Ascending aorta (tissue), 2 donors: ENCODE measurements at regions of chr11 and their contacts with region 1.

Region 1: DNA sequence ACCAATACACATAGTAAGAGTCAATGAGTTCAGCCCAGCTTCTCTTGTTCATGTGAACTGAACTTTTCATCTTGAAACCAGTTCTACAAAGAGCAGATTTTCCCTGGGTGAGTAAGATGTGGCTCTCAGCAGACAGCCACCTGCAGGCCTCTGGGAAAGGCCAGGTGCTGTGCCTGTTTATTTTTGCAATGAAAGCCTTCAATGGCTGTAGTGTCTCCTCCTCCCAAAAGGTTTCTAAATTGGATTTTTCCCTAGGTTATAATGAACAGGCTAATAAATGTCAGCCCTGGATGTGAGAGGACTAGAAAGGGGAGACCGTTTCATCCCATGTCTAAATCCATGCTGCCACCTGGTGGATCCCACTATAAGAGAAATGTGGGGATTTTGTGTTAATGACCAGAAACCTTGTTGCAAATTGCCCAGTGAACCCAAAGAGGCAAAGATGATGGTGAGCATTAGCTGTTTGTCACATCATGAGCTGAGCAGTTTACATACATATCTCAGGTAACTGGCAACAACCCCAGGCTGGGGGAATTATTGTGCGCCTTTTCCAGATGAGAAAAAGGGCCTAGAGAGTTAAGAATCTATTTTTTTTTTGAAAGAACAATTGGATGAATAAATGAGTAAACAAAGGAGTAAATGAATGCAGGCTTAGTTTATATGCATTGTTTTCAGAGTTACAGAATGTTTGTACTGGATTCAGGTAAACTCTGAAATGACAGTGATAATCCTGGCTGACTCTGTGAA is 12.7 kb downstream of the C11orf91 start:
- DNase-seq: no peak
- H3K4me3 ChIP-seq: no peak overlapping the region
- H3K27ac ChIP-seq: no peak overlapping the region
- H3K4me1 ChIP-seq: peaks cover 6 to 17% of the 10 kb centered on the region in 2 donors
- H3K27me3 ChIP-seq: no peaks in the 10 kb centered on the region
- CTCF ChIP-seq: peak; percentile 36 to 62 (median 50)

Region 2: GRCh38 chr11:33362051-33362910 is 325.6 kb before region 1 on chr11:
- intact Hi-C with region 1: loop called (anchors 2 kb)
- DNase-seq: no peak
- H3K4me3 ChIP-seq: no peak overlapping the region
- H3K27ac ChIP-seq: no peak overlapping the region
- H3K4me1 ChIP-seq: no peaks in the 10 kb centered on the region
- H3K27me3 ChIP-seq: no peaks in the 10 kb centered on the region
- CTCF ChIP-seq: peak; percentile 46 to 67 (median 62)

Region 3: GRCh38 chr11:33700425-33701271 is 12.7 kb after region 1 on chr11 and contains the start of gene C11orf91:
- intact Hi-C with region 1: loop called (anchors 1 kb)
- DNase-seq: peak; percentile 72 to 96
- H3K4me3 ChIP-seq: peak within 1 kb of the TSS; percentile 67 to 72
- H3K27ac ChIP-seq: peak within 1 kb of the TSS; percentile 58 to 67
- H3K4me1 ChIP-seq: peaks cover 0 to 10% of the 10 kb centered on the region in 2 donors
- H3K27me3 ChIP-seq: no peaks in the 10 kb centered on the region
- CTCF ChIP-seq: no peak
- total RNA-seq, gene C11orf91: not detected

Region 4: GRCh38 chr11:33736148-33736809 is 48.4 kb after region 1 on chr11 and contains the start of gene CD59:
- intact Hi-C with region 1: loop called (anchors 1 kb)
- DNase-seq: peak; percentile 84 to 97
- H3K4me3 ChIP-seq: peak within 1 kb of the TSS; percentile 89 to 95
- H3K27ac ChIP-seq: peak within 1 kb of the TSS; percentile 92 to 93
- H3K4me1 ChIP-seq: no peaks in the 10 kb centered on the region
- H3K27me3 ChIP-seq: no peaks in the 10 kb centered on the region
- CTCF ChIP-seq: no peak
- total RNA-seq, gene CD59: 637 TPM

Region 5: GRCh38 chr11:33773987-33774735 is 86.3 kb after region 1 on chr11 and contains the start of gene FBXO3:
- intact Hi-C with region 1: loop called (anchors 2 kb)
- DNase-seq: peak; percentile 61 to 93
- H3K4me3 ChIP-seq: peak within 1 kb of the TSS; percentile 85 to 90
- H3K27ac ChIP-seq: peak within 1 kb of the TSS; percentile 87 to 89
- H3K4me1 ChIP-seq: peaks cover 7 to 26% of the 10 kb centered on the region in 2 donors
- H3K27me3 ChIP-seq: no peaks in the 10 kb centered on the region
- CTCF ChIP-seq: no peak
- total RNA-seq, gene FBXO3: 11.8 TPM

Region 6: DNA sequence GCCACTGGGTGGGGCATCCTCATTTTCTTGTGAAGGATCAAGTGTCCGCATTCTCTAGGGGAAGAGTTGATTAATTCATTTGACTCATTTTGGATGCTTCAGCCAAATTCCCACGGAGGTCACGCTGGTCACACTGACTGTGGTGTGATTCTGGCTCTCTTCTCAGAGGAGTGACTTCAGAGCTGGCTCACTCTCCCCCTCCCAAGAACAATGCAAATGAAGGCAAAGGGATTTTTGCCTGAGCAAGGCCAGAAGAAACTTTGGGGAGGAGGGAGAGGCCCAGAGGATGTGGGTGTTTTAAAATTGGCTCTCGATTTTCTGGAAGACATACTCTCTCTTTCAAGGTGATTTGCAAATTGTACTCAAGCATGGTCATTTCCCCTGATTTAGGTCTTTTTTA is 255.0 kb after region 1 on chr11:
- intact Hi-C with region 1: loop called (anchors 10 kb)
- DNase-seq: peak in 1 of 2 donors; percentile 84
- H3K4me3 ChIP-seq: no peak overlapping the region
- H3K27ac ChIP-seq: peak overlapping the region; percentile 51 to 74
- H3K4me1 ChIP-seq: peaks cover 0 to 28% of the 10 kb centered on the region in 2 donors
- H3K27me3 ChIP-seq: no peaks in the 10 kb centered on the region
- CTCF ChIP-seq: no peak

Region 7: GRCh38 chr11:33987975-33988580 is 300.2 kb after region 1 on chr11:
- intact Hi-C with region 1: no loop called
- DNase-seq: peak; percentile 27 to 74
- H3K4me3 ChIP-seq: no peak overlapping the region
- H3K27ac ChIP-seq: no peak overlapping the region
- H3K4me1 ChIP-seq: no peaks in the 10 kb centered on the region
- H3K27me3 ChIP-seq: no peaks in the 10 kb centered on the region
- CTCF ChIP-seq: peak; percentile 56 to 74 (median 59)

Region 8: DNA sequence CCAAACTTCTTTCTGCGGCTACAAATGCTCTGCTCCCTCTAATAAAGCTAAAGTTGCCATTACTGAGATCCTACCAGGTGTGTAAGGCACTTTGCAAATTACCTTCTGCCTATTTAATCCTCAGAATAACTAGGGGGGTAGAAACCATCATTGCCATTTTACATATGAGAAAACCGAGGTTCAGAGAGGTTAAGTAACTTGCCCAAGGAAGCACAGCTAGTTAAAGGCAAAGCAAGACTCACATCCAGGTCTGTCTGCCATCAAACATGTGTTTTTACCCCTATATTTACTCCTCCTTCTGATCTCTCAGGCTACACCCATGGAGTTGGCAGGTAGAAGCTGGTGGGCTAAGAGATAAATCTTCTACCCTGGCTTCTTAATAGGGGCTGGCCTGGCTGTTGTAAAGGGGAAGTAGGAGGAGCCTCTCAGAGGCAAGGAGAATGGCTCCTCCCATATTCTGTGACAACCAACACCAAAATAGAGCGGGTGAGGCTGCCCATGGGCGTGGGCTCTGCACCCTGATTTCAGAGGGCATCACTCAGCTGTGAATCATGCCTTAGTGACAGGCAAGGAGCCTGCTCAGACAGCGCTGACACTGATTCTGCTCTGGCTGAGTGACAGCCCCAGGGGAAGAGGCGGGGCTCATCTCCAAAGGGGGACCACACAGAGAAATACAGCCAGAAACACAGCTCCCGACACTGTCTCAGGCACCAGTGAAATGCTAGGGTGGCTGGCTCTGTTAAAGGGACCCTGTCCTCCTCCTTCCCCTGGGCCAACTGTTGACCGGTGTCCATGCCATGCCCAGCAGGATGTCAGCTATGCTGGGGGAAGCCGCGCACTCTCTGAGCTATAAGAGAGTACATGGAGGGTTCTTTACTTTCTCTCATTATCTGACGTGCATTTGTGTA is 563.1 kb after region 1 on chr11:
- intact Hi-C with region 1: loop called (anchors 10 kb)
- DNase-seq: peak; percentile 37 to 87
- H3K4me3 ChIP-seq: peak overlapping the region; percentile 11 to 50
- H3K27ac ChIP-seq: peak overlapping the region; percentile 78 to 86
- H3K4me1 ChIP-seq: peaks cover 3 to 11% of the 10 kb centered on the region in 2 donors
- H3K27me3 ChIP-seq: no peaks in the 10 kb centered on the region
- CTCF ChIP-seq: no peak